H1 (cell line): ENCODE measurements at regions of chr5 and their contacts with region 1.

Region 1: DNA sequence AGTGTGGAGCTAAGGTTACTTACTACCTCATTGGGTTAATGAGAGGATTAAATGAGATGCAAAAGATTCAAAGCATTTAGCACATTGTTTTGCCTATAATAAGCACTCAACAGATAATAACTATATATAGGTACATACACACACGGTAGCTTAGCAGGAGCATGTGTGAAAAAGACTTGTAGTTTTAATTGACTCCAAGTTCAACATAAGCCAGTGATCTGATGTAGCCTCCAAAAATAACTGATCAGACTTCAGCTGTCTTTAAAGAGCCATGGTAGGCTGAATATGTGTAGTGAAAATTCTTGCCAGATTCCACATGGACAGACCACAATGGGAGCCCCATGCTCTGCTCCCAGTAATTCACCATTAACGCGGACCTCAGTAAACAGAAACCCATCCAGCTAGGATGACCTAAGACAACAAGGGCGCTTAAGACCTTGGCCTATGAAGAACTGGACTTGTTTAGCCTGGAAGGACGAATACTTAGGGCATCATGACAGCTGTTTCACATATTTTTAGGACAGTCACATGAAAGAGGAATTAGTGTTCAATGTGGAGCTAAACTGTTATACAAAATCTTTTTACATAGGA is 115.1 kb upstream of the ZNF366 start:
- DNase-seq: no peak
- H3K4me3 ChIP-seq: no peak overlapping the region
- H3K27ac ChIP-seq: no peak overlapping the region
- H3K4me1 ChIP-seq: peaks cover 0 to 9% (median 6%) of the 10 kb centered on the region in 4 experiments; a peak in 5 of 7 replicates
- H3K27me3 ChIP-seq: no peaks in the 10 kb centered on the region
- CTCF ChIP-seq: no peak
- EP300 ChIP-seq: no peak
- POLR2A ChIP-seq: no peak
- RAD21 ChIP-seq: no peak

Region 2: GRCh38 chr5:72611118-72611730 is 11.0 kb before region 1 on chr5:
- CTCF ChIA-PET with region 1: interaction called, 15 read pairs
- POLR2A ChIA-PET with region 1: interaction called, 3 read pairs
- DNase-seq: peak; percentile 39 to 67
- H3K4me3 ChIP-seq: no peak overlapping the region
- H3K27ac ChIP-seq: no peak overlapping the region
- H3K4me1 ChIP-seq: no peaks in the 10 kb centered on the region
- H3K27me3 ChIP-seq: no peaks in the 10 kb centered on the region
- CTCF ChIP-seq: peak; percentile 59 to 71 (median 69)
- EP300 ChIP-seq: no peak
- POLR2A ChIP-seq: no peak
- RAD21 ChIP-seq: peak; percentile 68 to 79

Region 3: GRCh38 chr5:72649449-72649848 is 27.2 kb after region 1 on chr5:
- CTCF ChIA-PET with region 1: no interaction called
- POLR2A ChIA-PET with region 1: no interaction called
- DNase-seq: no peak
- H3K4me3 ChIP-seq: no peak overlapping the region
- H3K27ac ChIP-seq: no peak overlapping the region
- H3K4me1 ChIP-seq: peaks cover 0 to 2% (median 1%) of the 10 kb centered on the region in 4 experiments; a peak in 3 of 7 replicates
- H3K27me3 ChIP-seq: no peaks in the 10 kb centered on the region; a peak in 1 of 7 replicates
- CTCF ChIP-seq: no peak
- EP300 ChIP-seq: no peak
- POLR2A ChIP-seq: no peak
- RAD21 ChIP-seq: no peak